ENCODE measurements at regions of chr5 and their contacts with region 1.

Region 1: GRCh38 chr5:79774171-79774854 is 84.7 kb downstream of the CMYA5 start:
- DNase-seq: peak; percentile 44
- ATAC-seq: peak; percentile 36
- H3K4me3 Mint-ChIP-seq: no peak overlapping the region
- H3K27ac Mint-ChIP-seq: peak overlapping the region; percentile 22
- H3K4me1 Mint-ChIP-seq: peaks cover 12% of the 10 kb centered on the region
- H3K27me3 Mint-ChIP-seq: no peaks in the 10 kb centered on the region

Region 2: DNA sequence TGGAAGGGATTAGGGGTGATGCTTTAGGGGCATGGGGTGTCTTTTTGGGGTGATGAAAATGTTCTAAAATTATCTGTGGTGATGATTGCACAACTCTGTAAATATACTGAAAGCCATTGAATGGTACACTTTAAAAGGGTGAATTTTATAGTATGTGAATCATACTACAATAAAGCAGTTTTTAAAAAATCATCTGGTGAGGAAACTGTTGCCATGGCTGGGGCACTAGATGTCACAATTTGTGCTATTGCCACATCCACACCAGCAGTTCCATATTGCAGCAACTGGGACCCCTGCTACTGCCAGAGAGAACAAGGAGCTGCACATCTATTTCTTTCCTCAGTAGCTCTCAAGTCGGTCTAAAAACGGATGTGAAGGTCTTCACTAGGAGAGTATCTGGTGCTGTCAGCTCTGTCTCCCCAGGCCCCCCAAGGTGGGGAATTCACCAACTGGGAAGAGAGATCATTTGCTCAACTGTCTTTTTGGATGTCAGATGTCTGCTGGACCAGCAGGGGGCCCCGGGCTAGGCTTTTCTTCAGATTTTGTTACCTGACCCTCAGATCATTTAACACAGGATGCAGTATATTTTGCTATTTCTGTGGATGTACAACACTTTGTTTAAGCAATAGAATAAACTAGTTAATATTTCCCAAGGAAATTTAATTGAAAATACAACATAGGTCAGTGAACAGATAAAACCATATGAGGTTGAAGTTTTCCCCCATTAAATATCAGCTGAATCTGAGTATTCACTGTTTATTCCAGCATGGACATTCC is 71.5 kb before region 1 on chr5:
- CTCF ChIA-PET with region 1: interaction called, 22 read pairs
- POLR2A ChIA-PET with region 1: no interaction called
- DNase-seq: peak; percentile 65
- ATAC-seq: peak; percentile 27
- H3K4me3 Mint-ChIP-seq: no peak overlapping the region
- H3K27ac Mint-ChIP-seq: peak overlapping the region; percentile 31
- H3K4me1 Mint-ChIP-seq: peaks cover 12% of the 10 kb centered on the region
- H3K27me3 Mint-ChIP-seq: no peaks in the 10 kb centered on the region

Region 3: DNA sequence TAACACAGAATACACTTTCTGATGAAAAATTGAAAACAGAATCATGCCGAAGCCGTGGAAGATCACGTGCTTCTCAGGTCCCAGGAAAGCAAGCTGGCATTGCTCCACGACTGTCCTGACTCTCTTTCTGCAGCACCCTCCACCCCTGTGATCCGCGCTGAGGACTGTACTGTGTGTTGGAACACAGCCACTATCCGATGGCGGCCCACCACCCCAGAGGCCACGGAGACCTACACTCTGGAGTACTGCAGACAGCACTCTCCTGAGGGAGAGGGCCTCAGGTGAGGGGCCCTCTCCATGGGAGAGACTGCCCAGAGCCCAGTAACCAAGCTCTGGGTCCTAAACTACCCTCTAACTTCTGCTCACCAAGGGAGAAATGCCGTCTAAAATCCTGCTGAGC is 11.4 kb before region 1 on chr5:
- CTCF ChIA-PET with region 1: interaction called, 14 read pairs
- POLR2A ChIA-PET with region 1: no interaction called
- DNase-seq: no peak
- ATAC-seq: no peak
- H3K4me3 Mint-ChIP-seq: no peak overlapping the region
- H3K27ac Mint-ChIP-seq: no peak overlapping the region
- H3K4me1 Mint-ChIP-seq: peaks cover 15% of the 10 kb centered on the region
- H3K27me3 Mint-ChIP-seq: peaks cover 6% of the 10 kb centered on the region